CD8-positive, alpha-beta T cell (primary cell): ENCODE measurements at regions of chr3 and their contacts with region 1.

Region 1: DNA sequence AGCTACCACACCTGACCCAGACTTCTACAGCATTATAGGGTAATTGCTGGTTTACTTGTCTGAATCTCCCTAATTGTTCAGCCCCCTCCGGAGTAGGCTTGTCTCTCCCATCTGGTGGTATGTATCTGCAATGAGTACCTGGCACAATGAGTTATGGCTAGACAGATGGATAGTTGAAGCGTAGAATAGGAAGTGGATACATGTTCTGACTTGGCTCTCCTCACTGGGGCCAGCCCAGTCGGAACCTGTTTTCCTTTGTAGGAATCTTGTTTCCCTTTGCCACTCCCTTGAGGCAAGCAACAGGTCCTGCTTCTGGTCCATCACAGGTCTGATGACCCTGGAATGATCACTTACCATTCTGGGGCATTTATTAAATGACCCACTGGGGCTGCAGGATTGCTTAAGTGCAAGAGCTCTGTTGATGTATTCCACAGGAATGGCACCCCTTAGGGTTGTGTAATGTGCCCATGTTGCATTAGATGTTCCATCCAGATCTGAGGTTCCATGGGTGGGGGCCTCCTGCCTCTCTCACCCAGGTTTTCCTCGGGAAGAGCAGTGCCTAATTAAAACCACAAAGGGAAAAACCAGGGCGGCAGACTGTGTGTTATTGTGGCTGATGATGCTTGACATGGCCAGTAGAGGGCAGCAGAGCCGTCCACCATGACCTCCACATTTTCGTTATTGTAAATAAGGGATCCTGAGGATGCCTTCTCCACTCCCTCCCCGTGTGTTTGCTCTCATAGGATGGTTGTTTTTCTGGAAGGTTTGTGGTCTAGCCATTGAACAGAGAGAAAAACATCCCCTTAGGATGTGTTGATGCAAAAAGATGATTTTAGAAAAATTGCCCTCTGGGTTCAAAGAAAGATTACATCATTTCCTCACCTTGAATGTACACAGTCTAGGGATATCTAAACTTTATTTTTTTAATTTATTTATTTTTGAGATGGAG is 58.0 kb downstream of the CMTM8 start:
- DNase-seq: peak; percentile 16 to 79 (median 62)
- ATAC-seq: peak; percentile 76
- H3K4me3 ChIP-seq: no peak overlapping the region
- H3K4me3 Mint-ChIP-seq: peak overlapping the region; percentile 61
- H3K27ac ChIP-seq: no peak overlapping the region
- H3K27ac Mint-ChIP-seq: peak overlapping the region; percentile 85
- H3K4me1 ChIP-seq: peaks cover 7% of the 10 kb centered on the region
- H3K4me1 Mint-ChIP-seq: peaks cover 15% of the 10 kb centered on the region
- H3K27me3 ChIP-seq: no peaks in the 10 kb centered on the region
- H3K27me3 Mint-ChIP-seq: no peaks in the 10 kb centered on the region
- CTCF ChIP-seq: peak; percentile 91

Region 2: DNA sequence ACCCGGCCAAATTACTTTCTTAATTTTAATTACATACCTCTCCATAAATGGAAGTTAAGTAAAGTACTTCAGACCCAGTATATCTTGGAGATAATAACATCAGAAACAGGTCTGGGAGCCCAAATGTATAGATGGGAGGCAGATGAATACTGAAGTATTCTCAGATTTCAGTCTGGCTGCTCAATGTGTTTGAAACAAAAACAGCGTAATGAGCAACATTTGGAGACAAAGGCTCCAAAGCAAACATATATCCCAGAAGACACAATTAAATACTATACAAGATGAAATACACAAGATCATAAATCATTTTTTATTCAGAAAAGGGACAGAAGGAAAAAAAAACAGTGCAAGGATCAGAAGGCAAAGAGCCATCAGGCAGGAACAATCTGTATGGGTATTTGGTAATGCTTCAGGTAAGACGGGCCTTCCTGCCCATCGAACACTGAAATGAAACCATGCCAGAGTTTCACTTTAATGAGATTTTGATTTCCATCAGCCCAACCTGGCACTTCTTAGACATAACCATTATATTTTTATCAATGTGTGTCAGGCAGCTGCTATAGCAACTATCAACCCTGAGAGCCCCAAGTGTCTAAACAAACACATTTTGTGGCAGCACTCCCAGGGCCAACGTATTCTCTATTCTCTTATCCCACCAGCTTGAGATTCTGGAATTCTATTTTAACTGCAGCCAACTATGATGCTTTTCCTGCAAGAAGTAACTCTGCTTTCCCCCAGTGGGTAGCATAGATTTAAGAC is 553.0 kb before region 1 on chr3:
- CTCF ChIA-PET with region 1: no interaction called
- POLR2A ChIA-PET with region 1: no interaction called
- intact Hi-C with region 1: no loop called
- DNase-seq: no peak
- ATAC-seq: no peak
- H3K4me3 ChIP-seq: no peak overlapping the region
- H3K4me3 Mint-ChIP-seq: no peak overlapping the region
- H3K27ac ChIP-seq: no peak overlapping the region
- H3K27ac Mint-ChIP-seq: no peak overlapping the region
- H3K4me1 ChIP-seq: no peaks in the 10 kb centered on the region
- H3K4me1 Mint-ChIP-seq: no peaks in the 10 kb centered on the region
- H3K27me3 ChIP-seq: no peaks in the 10 kb centered on the region
- H3K27me3 Mint-ChIP-seq: no peaks in the 10 kb centered on the region
- CTCF ChIP-seq: no peak

Region 3: GRCh38 chr3:32154205-32154579 is 142.3 kb before region 1 on chr3:
- CTCF ChIA-PET with region 1: no interaction called
- POLR2A ChIA-PET with region 1: no interaction called
- intact Hi-C with region 1: no loop called
- DNase-seq: no peak
- ATAC-seq: no peak
- H3K4me3 ChIP-seq: no peak overlapping the region
- H3K4me3 Mint-ChIP-seq: no peak overlapping the region
- H3K27ac ChIP-seq: no peak overlapping the region
- H3K27ac Mint-ChIP-seq: no peak overlapping the region
- H3K4me1 ChIP-seq: no peaks in the 10 kb centered on the region
- H3K4me1 Mint-ChIP-seq: no peaks in the 10 kb centered on the region
- H3K27me3 ChIP-seq: no peaks in the 10 kb centered on the region
- H3K27me3 Mint-ChIP-seq: no peaks in the 10 kb centered on the region
- CTCF ChIP-seq: no peak

Region 4: GRCh38 chr3:32285891-32286290 is 10.6 kb before region 1 on chr3:
- CTCF ChIA-PET with region 1: interaction called, 16 read pairs
- POLR2A ChIA-PET with region 1: interaction called, 4 read pairs
- intact Hi-C with region 1: no loop called
- DNase-seq: peak in 2 of 9 experiments; percentile 6 to 15
- ATAC-seq: no peak
- H3K4me3 ChIP-seq: no peak overlapping the region
- H3K4me3 Mint-ChIP-seq: no peak overlapping the region
- H3K27ac ChIP-seq: no peak overlapping the region
- H3K27ac Mint-ChIP-seq: no peak overlapping the region
- H3K4me1 ChIP-seq: peaks cover 25% of the 10 kb centered on the region
- H3K4me1 Mint-ChIP-seq: peaks cover 7% of the 10 kb centered on the region
- H3K27me3 ChIP-seq: no peaks in the 10 kb centered on the region
- H3K27me3 Mint-ChIP-seq: no peaks in the 10 kb centered on the region
- CTCF ChIP-seq: no peak

Region 5: GRCh38 chr3:32334675-32335074 is 38.1 kb after region 1 on chr3:
- CTCF ChIA-PET with region 1: interaction called, 56 read pairs
- POLR2A ChIA-PET with region 1: interaction called, 3 read pairs
- intact Hi-C with region 1: loop called (anchors 1 to 2 kb)
- DNase-seq: peak in 8 of 9 experiments; percentile 29 to 66 (median 37)
- ATAC-seq: peak; percentile 81
- H3K4me3 ChIP-seq: no peak overlapping the region
- H3K4me3 Mint-ChIP-seq: no peak overlapping the region
- H3K27ac ChIP-seq: no peak overlapping the region
- H3K27ac Mint-ChIP-seq: peak overlapping the region; percentile 89
- H3K4me1 ChIP-seq: peaks cover 18% of the 10 kb centered on the region
- H3K4me1 Mint-ChIP-seq: peaks cover 28% of the 10 kb centered on the region
- H3K27me3 ChIP-seq: no peaks in the 10 kb centered on the region
- H3K27me3 Mint-ChIP-seq: no peaks in the 10 kb centered on the region
- CTCF ChIP-seq: no peak

Region 6: GRCh38 chr3:32401556-32402081 is 105.1 kb after region 1 on chr3:
- CTCF ChIA-PET with region 1: interaction called, 3 read pairs
- POLR2A ChIA-PET with region 1: no interaction called
- intact Hi-C with region 1: loop called (anchors 1 kb)
- DNase-seq: peak in 8 of 9 experiments; percentile 50 to 81 (median 70)
- ATAC-seq: peak; percentile 73
- H3K4me3 ChIP-seq: peak overlapping the region; percentile 53 to 66
- H3K4me3 Mint-ChIP-seq: peak overlapping the region; percentile 86
- H3K27ac ChIP-seq: peak overlapping the region; percentile 81 to 83
- H3K27ac Mint-ChIP-seq: peak overlapping the region; percentile 99
- H3K4me1 ChIP-seq: peaks cover 46% of the 10 kb centered on the region
- H3K4me1 Mint-ChIP-seq: peaks cover 78% of the 10 kb centered on the region
- H3K27me3 ChIP-seq: no peaks in the 10 kb centered on the region
- H3K27me3 Mint-ChIP-seq: no peaks in the 10 kb centered on the region
- CTCF ChIP-seq: no peak